Naive thymus-derived CD4-positive, alpha-beta T cell (primary cell): ENCODE measurements at regions of chr9 and their contacts with region 1.

Region 1: DNA sequence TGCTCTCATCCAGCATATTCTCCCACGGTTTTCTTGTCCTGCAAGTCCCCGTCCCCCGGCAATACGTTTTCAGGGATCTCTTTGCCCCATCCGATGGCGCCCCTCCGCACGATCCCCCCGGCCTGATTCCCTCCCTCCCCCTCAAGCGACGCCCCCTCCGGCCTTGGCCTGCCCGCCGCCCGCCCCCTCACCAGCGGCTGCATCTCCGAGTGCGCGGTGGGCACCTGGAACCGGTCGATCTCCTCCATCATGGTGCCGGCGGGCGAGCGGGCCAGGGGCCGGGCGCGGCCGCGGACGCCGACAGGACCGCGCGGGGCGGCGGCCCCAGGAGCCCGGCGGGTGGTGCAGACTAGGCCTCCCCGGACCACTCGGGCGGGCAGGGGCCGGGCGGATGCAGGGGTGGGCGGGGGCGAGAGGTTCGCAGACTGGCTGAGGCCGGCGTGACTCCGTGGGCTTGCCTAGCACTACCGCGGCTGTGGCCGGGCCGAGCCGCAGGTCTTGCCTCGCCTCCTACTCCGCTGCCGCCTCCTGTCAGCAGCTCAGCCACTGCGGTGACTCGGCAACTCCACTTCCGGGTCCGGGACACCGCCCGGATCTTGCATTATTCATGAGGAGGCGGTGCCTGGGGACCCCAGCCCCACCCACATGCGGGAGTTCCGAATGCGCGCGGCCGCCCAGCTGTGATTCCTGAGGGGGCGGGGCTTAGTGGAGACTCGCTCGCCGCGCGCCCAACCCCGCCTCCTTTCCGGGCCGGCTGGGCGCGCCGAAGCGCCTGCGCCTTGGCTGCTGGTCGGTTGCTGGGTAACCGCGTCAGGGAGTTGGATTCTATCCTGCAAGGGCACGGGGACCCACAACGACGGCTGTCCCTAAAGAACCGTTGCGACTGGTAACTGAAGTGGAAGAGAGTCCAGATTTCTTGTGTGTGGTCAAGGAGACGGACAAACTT is at the starts of genes DNAI1 and FAM219A:
- DNase-seq: peak; percentile 97 to 100 (median 99)
- ATAC-seq: peak; percentile 98
- H3K4me3 ChIP-seq: peak within 1 kb of the TSS; percentile 68
- H3K4me3 Mint-ChIP-seq: peak within 1 kb of the TSS; percentile 86 to 93 (median 92)
- H3K27ac ChIP-seq: peak within 1 kb of the TSS; percentile 41
- H3K27ac Mint-ChIP-seq: peak within 1 kb of the TSS; percentile 57 to 93 (median 82)
- H3K4me1 ChIP-seq: peaks cover 13 to 16% of the 10 kb centered on the region in 2 donors
- H3K4me1 Mint-ChIP-seq: peaks cover 28 to 46% (median 38%) of the 10 kb centered on the region in 7 donors
- H3K27me3 ChIP-seq: no peaks in the 10 kb centered on the region
- H3K27me3 Mint-ChIP-seq: peaks cover 0 to 23% (median 6%) of the 10 kb centered on the region in 5 donors
- total RNA-seq, gene DNAI1: not detected
- total RNA-seq, gene FAM219A: 12.3 to 14.6 (median 13.4) TPM

Region 2: GRCh38 chr9:34048923-34049697 is 409.2 kb before region 1 on chr9:
- CTCF ChIA-PET with region 1: no interaction called
- POLR2A ChIA-PET with region 1: no interaction called
- intact Hi-C with region 1: loop called in 1 of 2 experiments (anchors 1 kb)
- DNase-seq: peak; percentile 96 to 99 (median 97)
- ATAC-seq: peak; percentile 93
- H3K4me3 ChIP-seq: peak overlapping the region; percentile 98
- H3K4me3 Mint-ChIP-seq: peak overlapping the region; percentile 96 to 100 (median 98)
- H3K27ac ChIP-seq: peak overlapping the region; percentile 86
- H3K27ac Mint-ChIP-seq: peak overlapping the region; percentile 98 to 100 (median 99)
- H3K4me1 ChIP-seq: peaks cover 11 to 22% of the 10 kb centered on the region in 2 donors
- H3K4me1 Mint-ChIP-seq: peaks cover 25 to 55% (median 31%) of the 10 kb centered on the region in 7 donors
- H3K27me3 ChIP-seq: no peaks in the 10 kb centered on the region
- H3K27me3 Mint-ChIP-seq: peaks cover 0 to 4% (median 0%) of the 10 kb centered on the region in 5 donors

Region 3: GRCh38 chr9:34178520-34179212 is 279.6 kb before region 1 on chr9 and contains the start of gene UBAP1:
- CTCF ChIA-PET with region 1: no interaction called
- POLR2A ChIA-PET with region 1: no interaction called
- intact Hi-C with region 1: loop called (anchors 1 to 2 kb)
- DNase-seq: peak; percentile 83 to 97 (median 93)
- ATAC-seq: peak; percentile 99
- H3K4me3 ChIP-seq: peak within 1 kb of the TSS; percentile 93
- H3K4me3 Mint-ChIP-seq: peak within 1 kb of the TSS; percentile 93 to 100 (median 96)
- H3K27ac ChIP-seq: peak within 1 kb of the TSS; percentile 97
- H3K27ac Mint-ChIP-seq: peak within 1 kb of the TSS; percentile 94 to 99 (median 98)
- H3K4me1 ChIP-seq: peaks cover 0 to 8% of the 10 kb centered on the region in 2 donors
- H3K4me1 Mint-ChIP-seq: peaks cover 7 to 33% (median 21%) of the 10 kb centered on the region in 7 donors
- H3K27me3 ChIP-seq: no peaks in the 10 kb centered on the region
- H3K27me3 Mint-ChIP-seq: no peaks in the 10 kb centered on the region
- total RNA-seq, gene UBAP1: 31.1 to 39.9 (median 32.8) TPM

Region 4: GRCh38 chr9:34403554-34404380 is 54.5 kb before region 1 on chr9:
- CTCF ChIA-PET with region 1: interaction called, 4 read pairs
- POLR2A ChIA-PET with region 1: no interaction called
- intact Hi-C with region 1: loop called in 1 of 2 experiments (anchors 2 kb)
- DNase-seq: peak in 8 of 9 donors; percentile 22 to 56 (median 40)
- ATAC-seq: peak; percentile 82
- H3K4me3 ChIP-seq: no peak overlapping the region
- H3K4me3 Mint-ChIP-seq: no peak overlapping the region
- H3K27ac ChIP-seq: no peak overlapping the region
- H3K27ac Mint-ChIP-seq: no peak overlapping the region
- H3K4me1 ChIP-seq: no peaks in the 10 kb centered on the region
- H3K4me1 Mint-ChIP-seq: peaks cover 0 to 3% (median 0%) of the 10 kb centered on the region in 7 donors
- H3K27me3 ChIP-seq: no peaks in the 10 kb centered on the region
- H3K27me3 Mint-ChIP-seq: no peaks in the 10 kb centered on the region

Region 5: DNA sequence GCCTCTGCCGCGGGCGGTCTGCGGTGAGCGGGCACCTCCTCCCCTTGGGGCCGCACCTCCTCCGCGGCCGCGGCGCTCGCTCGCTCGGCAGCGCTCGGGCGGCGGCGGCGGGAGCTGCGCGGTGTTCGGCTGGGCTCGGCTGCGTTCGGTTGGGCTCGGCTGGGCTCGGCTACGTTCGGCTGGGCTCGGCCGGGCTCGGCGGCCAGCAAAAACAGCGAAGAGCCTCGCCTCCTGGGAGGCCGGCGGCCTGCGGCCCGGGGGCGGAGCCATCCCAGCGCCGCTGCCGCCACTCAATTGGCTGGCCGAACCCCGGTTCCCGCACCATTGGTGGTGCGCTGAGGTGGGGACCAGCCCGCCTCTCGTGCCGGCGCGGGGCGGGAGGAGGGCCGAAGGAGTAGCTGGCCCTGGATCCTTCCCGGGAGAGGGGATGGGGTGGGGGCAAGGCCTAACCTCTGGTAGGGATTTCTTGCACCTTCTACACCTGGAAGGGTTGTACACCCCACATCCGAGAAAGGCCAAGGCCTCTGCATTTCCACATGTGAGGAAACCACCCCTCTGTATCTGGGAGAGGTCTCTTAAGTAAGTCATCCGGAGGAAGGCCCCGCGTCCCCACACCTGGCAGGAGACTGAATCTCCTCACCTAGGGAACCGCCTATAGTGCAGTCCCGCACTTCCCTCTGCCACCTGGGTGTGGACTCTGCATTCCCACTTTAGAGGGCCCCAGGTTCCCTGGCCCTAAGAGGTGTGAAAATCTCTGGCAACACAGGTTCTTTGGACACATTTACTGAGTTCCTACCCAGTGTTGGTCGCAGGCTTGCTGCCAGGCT is 64.9 kb after region 1 on chr9 and contains the start of gene ENHO:
- CTCF ChIA-PET with region 1: no interaction called
- POLR2A ChIA-PET with region 1: no interaction called
- intact Hi-C with region 1: loop called (anchors 1 kb)
- DNase-seq: peak; percentile 77 to 97 (median 91)
- ATAC-seq: peak; percentile 97
- H3K4me3 ChIP-seq: peak within 1 kb of the TSS; percentile 66
- H3K4me3 Mint-ChIP-seq: peak within 1 kb of the TSS; percentile 70 to 83 (median 78)
- H3K27ac ChIP-seq: peak within 1 kb of the TSS; percentile 61
- H3K27ac Mint-ChIP-seq: peak within 1 kb of the TSS in 7 of 9 donors; percentile 18 to 79 (median 61)
- H3K4me1 ChIP-seq: peaks cover 7 to 10% of the 10 kb centered on the region in 2 donors
- H3K4me1 Mint-ChIP-seq: peaks cover 5 to 19% (median 10%) of the 10 kb centered on the region in 7 donors
- H3K27me3 ChIP-seq: no peaks in the 10 kb centered on the region
- H3K27me3 Mint-ChIP-seq: peaks cover 0 to 55% (median 8%) of the 10 kb centered on the region in 5 donors
- total RNA-seq, gene ENHO: 0.56 to 1.9 TPM in 2 of 5 experiments, not detected in the others

Region 6: GRCh38 chr9:34546834-34547827 is 88.8 kb after region 1 on chr9:
- CTCF ChIA-PET with region 1: no interaction called
- POLR2A ChIA-PET with region 1: no interaction called
- intact Hi-C with region 1: no loop called
- DNase-seq: peak in 5 of 9 donors; percentile 21 to 47 (median 23)
- ATAC-seq: peak; percentile 58
- H3K4me3 ChIP-seq: no peak overlapping the region
- H3K4me3 Mint-ChIP-seq: peak overlapping the region in 1 of 10 donors; percentile 34
- H3K27ac ChIP-seq: no peak overlapping the region
- H3K27ac Mint-ChIP-seq: no peak overlapping the region
- H3K4me1 ChIP-seq: no peaks in the 10 kb centered on the region
- H3K4me1 Mint-ChIP-seq: peaks cover 0 to 10% (median 0%) of the 10 kb centered on the region in 7 donors
- H3K27me3 ChIP-seq: no peaks in the 10 kb centered on the region
- H3K27me3 Mint-ChIP-seq: peaks cover 7 to 34% (median 12%) of the 10 kb centered on the region in 5 donors

Region 7: DNA sequence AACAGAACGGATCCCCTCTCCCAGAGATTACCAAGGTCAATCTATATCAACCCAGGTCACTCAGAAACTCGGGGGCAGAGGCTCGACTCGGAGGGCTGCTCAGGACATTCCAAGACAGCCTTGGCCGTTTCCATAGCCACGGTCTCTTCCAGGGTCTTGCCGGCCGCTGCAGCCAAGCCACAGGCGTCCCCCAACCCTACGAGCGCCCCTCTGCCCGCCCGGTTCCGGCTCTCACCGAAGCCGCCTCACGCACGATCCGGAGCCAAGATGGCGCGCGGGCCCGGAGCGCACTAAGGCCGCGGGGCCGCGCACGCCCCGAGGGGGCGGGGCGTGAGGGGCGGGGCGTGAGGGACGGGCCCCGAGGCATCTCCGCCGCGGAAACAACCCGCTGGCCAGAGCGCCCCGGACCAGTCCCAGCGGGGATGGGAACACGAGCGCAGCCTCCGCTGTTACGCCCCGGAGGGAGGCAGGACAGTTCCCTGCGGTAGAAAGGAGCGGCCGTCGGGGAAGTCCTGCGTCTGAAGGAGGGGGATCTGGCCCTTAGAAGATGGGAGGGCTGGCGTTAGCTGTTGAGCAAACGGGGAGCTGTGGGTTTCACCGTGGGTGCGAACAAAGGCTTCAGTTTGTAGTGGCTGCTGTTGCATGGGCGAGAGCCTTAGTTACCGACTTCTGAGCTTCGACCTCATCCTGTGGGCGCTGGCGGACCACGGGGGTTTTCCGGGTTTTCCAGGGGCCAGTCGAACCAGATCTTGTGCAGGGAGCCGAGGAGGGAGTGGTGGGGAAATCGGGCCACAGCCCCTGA is 153.7 kb after region 1 on chr9 and contains the start of gene RPP25L:
- CTCF ChIA-PET with region 1: no interaction called
- POLR2A ChIA-PET with region 1: interaction called, 3 read pairs
- intact Hi-C with region 1: loop called (anchors 1 kb)
- DNase-seq: peak; percentile 75 to 94 (median 86)
- ATAC-seq: peak; percentile 96
- H3K4me3 ChIP-seq: peak within 1 kb of the TSS; percentile 89
- H3K4me3 Mint-ChIP-seq: peak within 1 kb of the TSS; percentile 84 to 96 (median 90)
- H3K27ac ChIP-seq: peak within 1 kb of the TSS; percentile 87
- H3K27ac Mint-ChIP-seq: peak within 1 kb of the TSS; percentile 84 to 96 (median 93)
- H3K4me1 ChIP-seq: peaks cover 10 to 17% of the 10 kb centered on the region in 2 donors
- H3K4me1 Mint-ChIP-seq: peaks cover 6 to 28% (median 21%) of the 10 kb centered on the region in 7 donors
- H3K27me3 ChIP-seq: no peaks in the 10 kb centered on the region
- H3K27me3 Mint-ChIP-seq: no peaks in the 10 kb centered on the region
- total RNA-seq, gene RPP25L: 8.8 to 27.3 (median 25.1) TPM

Region 8: DNA sequence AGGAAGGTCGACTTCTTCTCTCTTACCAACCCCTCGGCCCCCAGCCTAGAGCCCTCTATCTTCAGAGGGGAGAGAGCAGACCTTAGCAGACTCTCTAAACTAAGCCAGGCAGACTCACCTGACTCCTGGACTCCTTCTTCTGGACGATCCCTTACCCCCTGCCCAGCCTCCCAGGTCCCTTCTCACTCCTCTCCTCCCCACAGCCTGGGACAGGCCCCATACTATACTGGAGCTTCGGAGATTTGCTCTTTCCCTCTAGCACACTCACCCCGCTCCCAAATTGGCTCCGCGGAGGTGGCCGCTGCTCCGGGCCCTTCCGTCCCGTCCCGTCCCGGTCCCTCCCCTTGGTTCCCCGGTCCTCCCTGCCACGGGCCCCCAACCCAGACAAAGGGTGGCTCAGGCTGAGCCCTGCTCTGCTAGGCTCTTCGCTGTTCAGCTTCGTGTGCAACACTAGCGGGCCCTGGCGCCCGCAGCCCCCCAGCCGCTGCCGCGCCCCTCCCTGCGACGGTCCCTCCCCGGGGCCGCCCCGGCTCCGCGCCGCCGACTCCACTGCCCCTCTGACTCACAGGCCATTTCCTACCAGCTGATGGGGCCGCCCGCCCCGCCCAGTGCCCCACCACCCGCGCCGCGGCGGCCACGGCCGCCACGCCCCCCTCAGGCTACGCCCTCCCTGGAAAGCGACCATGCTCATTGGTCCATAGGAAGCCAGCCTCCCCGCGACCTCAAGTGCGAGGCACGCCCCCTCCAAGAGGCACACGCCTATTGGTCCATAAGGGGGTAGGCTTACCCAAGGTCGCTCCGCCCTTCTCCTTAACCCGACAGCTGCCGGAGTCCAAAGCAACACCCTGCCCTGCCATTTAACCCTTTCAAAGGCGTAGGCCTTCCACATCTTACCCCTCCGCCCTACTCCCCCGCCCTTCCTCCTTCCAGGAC is 653.0 kb after region 1 on chr9:
- CTCF ChIA-PET with region 1: no interaction called
- POLR2A ChIA-PET with region 1: no interaction called
- intact Hi-C with region 1: loop called in 1 of 2 experiments (anchors 1 kb)
- DNase-seq: peak; percentile 77 to 96 (median 91)
- ATAC-seq: peak; percentile 86
- H3K4me3 ChIP-seq: peak overlapping the region; percentile 69
- H3K4me3 Mint-ChIP-seq: peak overlapping the region; percentile 55 to 87 (median 80)
- H3K27ac ChIP-seq: peak overlapping the region; percentile 71
- H3K27ac Mint-ChIP-seq: peak overlapping the region; percentile 62 to 94 (median 85)
- H3K4me1 ChIP-seq: peaks cover 36 to 37% of the 10 kb centered on the region in 2 donors
- H3K4me1 Mint-ChIP-seq: peaks cover 29 to 63% (median 58%) of the 10 kb centered on the region in 7 donors
- H3K27me3 ChIP-seq: no peaks in the 10 kb centered on the region
- H3K27me3 Mint-ChIP-seq: no peaks in the 10 kb centered on the region